ENCODE measurements at regions of chr2 and their contacts with region 1.

Region 1: GRCh38 chr2:133780099-133780839 is 212.0 kb upstream of the NCKAP5 start:
- DNase-seq: peak; percentile 93
- H3K4me3 ChIP-seq: no peak overlapping the region
- H3K27ac ChIP-seq: peak overlapping the region; percentile 8
- H3K4me1 ChIP-seq: peaks cover 20% of the 10 kb centered on the region
- H3K27me3 ChIP-seq: no peaks in the 10 kb centered on the region
- CTCF ChIP-seq: peak; percentile 93

Region 2: GRCh38 chr2:132547074-132547687 is 1233.1 kb before region 1 on chr2:
- CTCF ChIA-PET with region 1: interaction called, 6 read pairs
- POLR2A ChIA-PET with region 1: no interaction called
- intact Hi-C with region 1: loop called (anchors 5 kb)
- DNase-seq: peak; percentile 88
- H3K4me3 ChIP-seq: no peak overlapping the region
- H3K27ac ChIP-seq: no peak overlapping the region
- H3K4me1 ChIP-seq: peaks cover 14% of the 10 kb centered on the region
- H3K27me3 ChIP-seq: no peaks in the 10 kb centered on the region
- CTCF ChIP-seq: peak; percentile 82

Region 3: GRCh38 chr2:133139847-133140533 is 640.3 kb before region 1 on chr2:
- CTCF ChIA-PET with region 1: interaction called, 10 read pairs
- POLR2A ChIA-PET with region 1: no interaction called
- intact Hi-C with region 1: no loop called
- DNase-seq: peak; percentile 38
- H3K4me3 ChIP-seq: peak overlapping the region; percentile 10
- H3K27ac ChIP-seq: no peak overlapping the region
- H3K4me1 ChIP-seq: peaks cover 29% of the 10 kb centered on the region
- H3K27me3 ChIP-seq: no peaks in the 10 kb centered on the region
- CTCF ChIP-seq: no peak

Region 4: GRCh38 chr2:133266041-133266925 is 514.0 kb before region 1 on chr2:
- CTCF ChIA-PET with region 1: interaction called, 8 read pairs
- POLR2A ChIA-PET with region 1: no interaction called
- intact Hi-C with region 1: loop called (anchors 5 kb)
- DNase-seq: peak; percentile 69
- H3K4me3 ChIP-seq: peak overlapping the region; percentile 81
- H3K27ac ChIP-seq: peak overlapping the region; percentile 81
- H3K4me1 ChIP-seq: peaks cover 50% of the 10 kb centered on the region
- H3K27me3 ChIP-seq: no peaks in the 10 kb centered on the region
- CTCF ChIP-seq: peak; percentile 47

Region 5: DNA sequence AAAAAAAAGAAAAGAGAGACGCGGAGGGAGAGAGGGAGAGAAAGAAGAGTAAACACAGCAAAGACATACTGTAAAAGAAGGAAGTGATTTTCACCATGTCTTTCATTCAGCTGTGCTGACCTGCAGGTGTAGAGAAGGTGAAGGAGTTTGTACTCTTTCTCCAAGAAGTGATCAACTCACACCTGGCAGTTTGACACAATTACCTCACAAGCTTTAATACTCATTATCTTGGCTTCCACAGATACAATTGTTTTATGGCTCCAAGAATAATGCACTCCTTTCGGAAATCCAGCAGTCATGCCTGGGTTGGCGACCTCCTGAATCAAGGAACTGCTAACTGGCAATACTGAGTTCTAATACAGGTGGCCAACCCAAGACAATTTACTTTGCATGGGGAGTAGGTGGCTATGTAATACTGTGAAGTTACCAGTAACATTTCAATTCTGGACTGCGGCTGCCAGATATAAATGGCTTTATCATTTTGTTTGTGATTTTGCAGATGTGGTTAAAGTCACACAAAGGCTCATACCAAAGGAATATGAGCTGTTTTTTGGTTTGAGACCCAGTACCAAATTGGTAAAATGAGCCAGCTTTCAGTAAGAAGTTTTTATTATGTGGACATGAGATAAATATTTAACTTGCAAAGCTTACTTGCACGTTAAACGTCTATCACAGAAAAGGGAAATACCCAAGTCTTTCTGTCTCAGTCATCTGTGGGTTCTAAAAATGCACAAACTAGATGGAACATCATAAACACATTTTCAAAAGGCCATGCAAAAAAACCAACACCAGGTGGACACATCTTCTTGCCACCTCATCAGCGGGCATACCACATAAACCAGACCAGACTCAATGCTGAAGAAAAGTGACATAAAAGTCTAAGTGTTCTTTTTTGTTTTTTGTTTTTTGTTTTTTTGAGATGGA is 281.3 kb before region 1 on chr2:
- CTCF ChIA-PET with region 1: interaction called, 3 read pairs
- POLR2A ChIA-PET with region 1: no interaction called
- intact Hi-C with region 1: loop called (anchors 1 kb)
- DNase-seq: no peak
- H3K4me3 ChIP-seq: no peak overlapping the region
- H3K27ac ChIP-seq: peak overlapping the region; percentile 99
- H3K4me1 ChIP-seq: peaks cover 91% of the 10 kb centered on the region
- H3K27me3 ChIP-seq: no peaks in the 10 kb centered on the region
- CTCF ChIP-seq: no peak

Region 6: GRCh38 chr2:133561045-133561852 is 219.0 kb before region 1 on chr2:
- CTCF ChIA-PET with region 1: interaction called, 7 read pairs
- POLR2A ChIA-PET with region 1: no interaction called
- intact Hi-C with region 1: loop called (anchors 2 kb)
- DNase-seq: peak; percentile 91
- H3K4me3 ChIP-seq: no peak overlapping the region
- H3K27ac ChIP-seq: peak overlapping the region; percentile 69
- H3K4me1 ChIP-seq: peaks cover 64% of the 10 kb centered on the region
- H3K27me3 ChIP-seq: no peaks in the 10 kb centered on the region
- CTCF ChIP-seq: peak; percentile 89

Region 7: DNA sequence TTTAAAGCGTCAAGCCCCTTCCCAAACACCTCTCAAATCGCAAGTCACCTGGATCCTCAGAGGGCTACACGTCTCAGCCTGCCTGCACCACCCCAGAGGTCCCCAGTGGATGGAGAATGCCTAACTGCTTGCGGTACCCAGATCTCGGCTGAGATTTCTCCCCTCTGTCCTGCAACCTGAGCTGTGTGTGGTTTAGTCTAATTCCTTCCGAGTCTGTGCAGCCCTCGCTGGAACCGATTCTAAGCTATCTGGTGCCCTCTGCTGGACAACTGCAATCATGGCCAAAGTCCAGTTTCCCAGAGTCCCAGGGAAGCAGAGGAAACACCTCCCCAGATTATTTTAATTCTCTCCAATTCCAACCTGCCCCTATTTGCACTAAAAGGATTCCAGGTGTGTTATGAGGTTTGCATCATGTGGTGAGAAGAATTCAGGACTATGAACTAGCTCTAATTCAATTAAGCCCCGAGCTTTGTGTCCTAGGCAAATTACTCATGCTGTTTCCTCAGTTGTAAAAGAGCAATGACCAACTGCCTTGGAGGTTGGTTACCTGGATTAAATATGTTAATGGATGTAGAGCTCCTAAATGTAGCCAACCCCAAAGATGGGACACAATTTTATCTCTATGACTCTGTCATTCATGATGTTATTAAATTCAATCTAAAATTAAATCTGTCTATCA is 64.1 kb after region 1 on chr2:
- CTCF ChIA-PET with region 1: interaction called, 4 read pairs
- POLR2A ChIA-PET with region 1: no interaction called
- intact Hi-C with region 1: loop called (anchors 2 kb)
- DNase-seq: peak; percentile 88
- H3K4me3 ChIP-seq: no peak overlapping the region
- H3K27ac ChIP-seq: no peak overlapping the region
- H3K4me1 ChIP-seq: peaks cover 41% of the 10 kb centered on the region
- H3K27me3 ChIP-seq: no peaks in the 10 kb centered on the region
- CTCF ChIP-seq: peak; percentile 94

Region 8: DNA sequence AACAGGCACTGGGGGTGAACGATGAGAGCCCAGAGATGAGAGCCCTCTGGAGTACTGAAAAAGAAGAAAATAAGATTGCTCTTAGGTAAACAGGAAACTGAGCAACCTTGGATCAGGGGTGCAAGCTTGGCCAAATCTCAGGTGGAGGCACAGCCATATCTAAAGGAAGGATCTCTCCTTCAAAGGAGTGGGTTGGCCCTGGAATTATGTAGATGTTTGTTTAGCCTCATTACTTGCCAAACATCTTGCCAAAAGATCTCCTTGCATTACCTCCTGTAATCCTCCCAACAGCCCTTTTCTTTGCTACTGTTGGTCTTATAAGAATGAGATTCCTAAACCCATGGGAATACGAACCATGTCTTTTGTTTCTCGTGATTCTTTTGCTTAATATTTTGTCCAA is 120.6 kb after region 1 on chr2:
- CTCF ChIA-PET with region 1: no interaction called
- POLR2A ChIA-PET with region 1: no interaction called
- intact Hi-C with region 1: no loop called
- DNase-seq: no peak
- H3K4me3 ChIP-seq: no peak overlapping the region
- H3K27ac ChIP-seq: no peak overlapping the region
- H3K4me1 ChIP-seq: no peaks in the 10 kb centered on the region
- H3K27me3 ChIP-seq: peaks cover 9% of the 10 kb centered on the region
- CTCF ChIP-seq: no peak